OCI-LY7 (cell line): ENCODE measurements at regions of chr1 and their contacts with region 1.

Region 1: GRCh38 chr1:212699104-212699624 is 476 bp downstream of the BATF3 start:
- DNase-seq: peak; percentile 63
- H3K4me3 ChIP-seq: peak overlapping the region; percentile 68
- H3K27ac ChIP-seq: no peak overlapping the region
- H3K4me1 ChIP-seq: peaks cover 33% of the 10 kb centered on the region
- CTCF ChIP-seq: peak; percentile 71

Region 2: GRCh38 chr1:212665241-212666115 is 33.7 kb before region 1 on chr1:
- CTCF ChIA-PET with region 1: interaction called, 5 read pairs
- POLR2A ChIA-PET with region 1: interaction called, 3 read pairs
- intact Hi-C with region 1: loop called (anchors 1 kb)
- DNase-seq: peak; percentile 75
- H3K4me3 ChIP-seq: peak overlapping the region; percentile 24
- H3K27ac ChIP-seq: no peak overlapping the region
- H3K4me1 ChIP-seq: peaks cover 7% of the 10 kb centered on the region
- CTCF ChIP-seq: peak; percentile 85

Region 3: GRCh38 chr1:212712451-212713303 is 13.5 kb after region 1 on chr1:
- CTCF ChIA-PET with region 1: no interaction called
- POLR2A ChIA-PET with region 1: no interaction called
- intact Hi-C with region 1: no loop called
- DNase-seq: no peak
- H3K4me3 ChIP-seq: no peak overlapping the region
- H3K27ac ChIP-seq: no peak overlapping the region
- H3K4me1 ChIP-seq: no peaks in the 10 kb centered on the region
- CTCF ChIP-seq: no peak

Region 4: GRCh38 chr1:212749821-212750535 is 50.8 kb after region 1 on chr1:
- CTCF ChIA-PET with region 1: no interaction called
- POLR2A ChIA-PET with region 1: interaction called, 4 read pairs
- intact Hi-C with region 1: loop called (anchors 2 kb)
- DNase-seq: peak; percentile 47
- H3K4me3 ChIP-seq: no peak overlapping the region
- H3K27ac ChIP-seq: peak overlapping the region; percentile 37
- H3K4me1 ChIP-seq: peaks cover 41% of the 10 kb centered on the region
- CTCF ChIP-seq: peak; percentile 96

Region 5: GRCh38 chr1:212782422-212783154 is 83.4 kb after region 1 on chr1:
- CTCF ChIA-PET with region 1: no interaction called
- POLR2A ChIA-PET with region 1: no interaction called
- intact Hi-C with region 1: loop called (anchors 1 kb)
- DNase-seq: peak; percentile 42
- H3K4me3 ChIP-seq: no peak overlapping the region
- H3K27ac ChIP-seq: no peak overlapping the region
- H3K4me1 ChIP-seq: no peaks in the 10 kb centered on the region
- CTCF ChIP-seq: peak; percentile 89

Region 6: GRCh38 chr1:213035573-213035972 is 336.4 kb after region 1 on chr1:
- CTCF ChIA-PET with region 1: no interaction called
- POLR2A ChIA-PET with region 1: no interaction called
- intact Hi-C with region 1: no loop called
- DNase-seq: no peak
- H3K4me3 ChIP-seq: no peak overlapping the region
- H3K27ac ChIP-seq: no peak overlapping the region
- H3K4me1 ChIP-seq: no peaks in the 10 kb centered on the region
- CTCF ChIP-seq: no peak

Region 7: DNA sequence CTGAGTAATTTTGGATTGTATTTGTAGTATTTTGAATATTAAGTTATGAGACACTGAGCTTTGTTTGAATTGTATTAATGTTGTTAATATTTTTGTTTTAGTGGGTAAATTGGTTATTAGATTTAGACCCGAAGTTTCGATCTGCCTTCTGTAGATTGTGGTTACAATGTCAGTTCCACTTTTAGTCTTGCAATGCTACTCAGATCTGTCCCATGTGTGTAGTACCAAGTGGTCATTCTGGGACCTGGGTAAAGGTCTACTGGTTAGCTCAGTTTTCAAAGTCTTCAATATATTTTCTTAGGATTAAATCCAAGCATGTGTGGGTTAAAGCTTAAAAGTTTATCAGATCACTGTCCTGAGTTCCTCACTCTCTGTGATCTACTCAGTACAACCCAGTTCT is 942.1 kb after region 1 on chr1:
- CTCF ChIA-PET with region 1: no interaction called
- POLR2A ChIA-PET with region 1: no interaction called
- intact Hi-C with region 1: no loop called
- DNase-seq: no peak
- H3K4me3 ChIP-seq: no peak overlapping the region
- H3K27ac ChIP-seq: no peak overlapping the region
- H3K4me1 ChIP-seq: no peaks in the 10 kb centered on the region
- CTCF ChIP-seq: no peak